Adrenal gland (tissue), 19 donors: ENCODE measurements at regions of chr4 and their contacts with region 1.

Region 1: DNA sequence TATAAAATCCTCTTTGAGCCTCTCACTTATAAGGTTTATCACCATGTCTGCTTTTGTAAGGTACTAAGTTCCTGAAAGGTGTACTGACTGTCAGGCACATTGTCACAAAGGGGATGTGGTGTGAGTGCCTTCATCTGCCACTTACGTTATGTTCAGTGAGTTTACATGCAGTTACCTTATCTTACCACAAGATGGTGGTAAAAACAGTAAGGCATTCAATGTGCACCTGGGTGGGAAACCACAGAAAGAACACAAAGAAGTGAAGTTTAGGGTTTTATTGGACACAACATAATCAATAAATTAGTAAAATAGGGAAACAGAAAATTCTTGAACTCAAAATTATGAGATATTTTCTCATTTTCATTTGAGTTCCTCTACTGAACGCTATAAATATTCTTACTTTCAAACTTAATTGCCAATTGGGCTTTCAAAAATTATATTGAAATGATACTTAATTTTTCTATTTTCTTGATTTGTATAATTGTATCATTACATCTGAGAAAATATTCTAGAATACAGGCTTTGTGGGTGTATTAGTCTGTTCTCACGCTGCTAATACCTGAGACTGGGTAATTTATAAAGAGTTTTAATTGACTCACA is 650.8 kb downstream of the PCDH7 start:
- DNase-seq: no peak
- H3K4me3 ChIP-seq: no peak overlapping the region
- H3K27ac ChIP-seq: no peak overlapping the region
- H3K4me1 ChIP-seq: no peaks in the 10 kb centered on the region
- H3K27me3 ChIP-seq: no peaks in the 10 kb centered on the region
- CTCF ChIP-seq: peak; percentile 53 to 77 (median 70)
- POLR2A ChIP-seq: no peak

Region 2: GRCh38 chr4:31667686-31668085 is 296.7 kb after region 1 on chr4:
- intact Hi-C with region 1: loop called in 1 of 2 experiments (anchors 10 kb)
- DNase-seq: no peak
- H3K4me3 ChIP-seq: no peak overlapping the region
- H3K27ac ChIP-seq: no peak overlapping the region
- H3K4me1 ChIP-seq: no peaks in the 10 kb centered on the region
- H3K27me3 ChIP-seq: no peaks in the 10 kb centered on the region
- CTCF ChIP-seq: no peak
- POLR2A ChIP-seq: no peak